A673 (cell line): ENCODE measurements at regions of chr4 and their contacts with region 1.

Region 1: GRCh38 chr4:187692626-187693025 is 302.9 kb upstream of the ZFP42 start:
- DNase-seq: no peak
- H3K4me3 ChIP-seq: no peak overlapping the region
- H3K27ac ChIP-seq: no peak overlapping the region
- H3K4me1 ChIP-seq: no peaks in the 10 kb centered on the region
- H3K27me3 ChIP-seq: peaks cover 21% of the 10 kb centered on the region
- CTCF ChIP-seq: no peak

Region 2: GRCh38 chr4:187333151-187333550 is 359.5 kb before region 1 on chr4:
- CTCF ChIA-PET with region 1: no interaction called
- POLR2A ChIA-PET with region 1: interaction called, 17 read pairs
- intact Hi-C with region 1: no loop called
- DNase-seq: no peak
- H3K4me3 ChIP-seq: no peak overlapping the region
- H3K27ac ChIP-seq: no peak overlapping the region
- H3K4me1 ChIP-seq: no peaks in the 10 kb centered on the region
- H3K27me3 ChIP-seq: peaks cover 52% of the 10 kb centered on the region
- CTCF ChIP-seq: no peak